ENCODE measurements at regions of chr1 and their contacts with region 1.

Region 1: GRCh38 chr1:204941421-204942338 is 71.0 kb downstream of the NFASC start:
- DNase-seq: peak; percentile 57 to 82 (median 76)
- H3K4me3 ChIP-seq: no peak overlapping the region
- H3K27ac ChIP-seq: no peak overlapping the region
- H3K4me1 ChIP-seq: peaks cover 0 to 3% (median 0%) of the 10 kb centered on the region in 4 experiments
- H3K27me3 ChIP-seq: peaks cover 0 to 8% (median 0%) of the 10 kb centered on the region in 5 experiments

Region 2: DNA sequence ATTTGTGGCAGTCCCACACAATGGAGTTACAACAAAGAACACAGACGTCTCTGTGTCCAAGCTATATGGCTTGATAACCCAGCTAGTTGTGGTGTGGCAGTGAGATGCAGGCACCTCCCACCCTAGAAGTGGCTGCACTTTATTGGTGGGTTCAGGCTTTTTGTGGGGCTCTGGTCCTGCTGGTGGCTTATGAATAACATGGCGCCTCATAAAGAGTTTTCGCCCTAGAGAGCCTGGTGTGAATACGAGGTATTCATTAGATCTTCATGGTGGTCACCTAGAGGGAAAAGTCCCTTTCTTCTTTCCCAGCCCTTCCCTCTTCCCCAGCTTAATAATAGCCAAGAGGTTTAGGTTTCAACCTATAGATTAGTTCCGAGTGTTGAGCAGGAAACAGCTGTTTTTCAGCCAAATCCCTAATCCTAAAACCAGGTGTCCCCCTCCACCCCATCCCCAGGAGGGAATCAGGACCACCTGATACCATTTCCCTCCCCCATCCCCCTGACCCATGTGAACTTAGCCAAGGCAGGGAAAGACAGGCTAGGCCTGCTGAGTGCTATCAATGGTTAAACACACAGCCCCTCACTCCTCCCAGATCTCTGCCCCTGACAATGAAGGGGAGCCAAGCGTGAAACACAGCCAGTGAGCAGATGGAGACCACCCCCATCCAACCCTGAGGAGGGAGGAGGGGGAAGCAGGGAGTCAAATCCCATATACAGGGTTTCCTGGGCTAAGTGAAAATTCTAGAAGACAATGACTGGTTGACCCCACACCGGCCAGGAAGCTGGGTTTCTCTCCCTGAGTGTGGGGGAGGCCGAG is 12.8 kb before region 1 on chr1:
- CTCF ChIA-PET with region 1: interaction called, 13 read pairs
- POLR2A ChIA-PET with region 1: no interaction called
- DNase-seq: no peak
- H3K4me3 ChIP-seq: no peak overlapping the region
- H3K27ac ChIP-seq: no peak overlapping the region
- H3K4me1 ChIP-seq: no peaks in the 10 kb centered on the region
- H3K27me3 ChIP-seq: peaks cover 0 to 17% (median 5%) of the 10 kb centered on the region in 5 experiments

Region 3: GRCh38 chr1:204961765-204962419 is 20.2 kb after region 1 on chr1:
- CTCF ChIA-PET with region 1: interaction called, 20 read pairs
- POLR2A ChIA-PET with region 1: no interaction called
- DNase-seq: no peak
- H3K4me3 ChIP-seq: no peak overlapping the region
- H3K27ac ChIP-seq: no peak overlapping the region
- H3K4me1 ChIP-seq: no peaks in the 10 kb centered on the region
- H3K27me3 ChIP-seq: peaks cover 0 to 25% (median 0%) of the 10 kb centered on the region in 5 experiments

Region 4: GRCh38 chr1:204975570-204976235 is 34.0 kb after region 1 on chr1:
- CTCF ChIA-PET with region 1: interaction called, 11 read pairs
- POLR2A ChIA-PET with region 1: no interaction called
- DNase-seq: peak; percentile 43 to 67 (median 53)
- H3K4me3 ChIP-seq: no peak overlapping the region
- H3K27ac ChIP-seq: no peak overlapping the region
- H3K4me1 ChIP-seq: peaks cover 6 to 49% (median 35%) of the 10 kb centered on the region in 4 experiments
- H3K27me3 ChIP-seq: no peaks in the 10 kb centered on the region

Region 5: GRCh38 chr1:205003393-205004131 is 61.9 kb after region 1 on chr1:
- CTCF ChIA-PET with region 1: no interaction called
- POLR2A ChIA-PET with region 1: no interaction called
- DNase-seq: no peak
- H3K4me3 ChIP-seq: no peak overlapping the region
- H3K27ac ChIP-seq: no peak overlapping the region
- H3K4me1 ChIP-seq: no peaks in the 10 kb centered on the region
- H3K27me3 ChIP-seq: no peaks in the 10 kb centered on the region

Region 6: DNA sequence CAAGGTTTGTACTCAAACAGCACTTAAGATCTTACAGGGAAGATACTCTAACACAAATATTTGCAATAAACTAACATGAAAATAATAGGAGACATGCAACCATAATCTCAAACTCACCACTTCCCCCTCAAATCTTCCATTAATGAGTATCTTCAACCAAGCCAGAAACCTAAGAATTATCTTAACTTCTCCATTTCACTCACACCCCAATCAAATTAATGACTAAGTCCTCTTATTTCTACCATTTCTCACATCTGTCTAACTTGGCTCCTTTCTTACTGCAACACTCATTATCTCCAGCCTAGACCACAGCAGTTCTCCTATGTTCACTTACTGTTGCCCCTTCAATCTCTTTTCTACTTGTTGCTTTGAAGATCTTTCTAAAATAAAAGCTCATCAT is 169.7 kb after region 1 on chr1:
- CTCF ChIA-PET with region 1: no interaction called
- POLR2A ChIA-PET with region 1: no interaction called
- DNase-seq: peak in 2 of 3 donors; percentile 23 to 48
- H3K4me3 ChIP-seq: no peak overlapping the region
- H3K27ac ChIP-seq: no peak overlapping the region
- H3K4me1 ChIP-seq: no peaks in the 10 kb centered on the region
- H3K27me3 ChIP-seq: no peaks in the 10 kb centered on the region